IMR-90 (cell line): ENCODE measurements at regions of chr13 and their contacts with region 1.

Region 1: DNA sequence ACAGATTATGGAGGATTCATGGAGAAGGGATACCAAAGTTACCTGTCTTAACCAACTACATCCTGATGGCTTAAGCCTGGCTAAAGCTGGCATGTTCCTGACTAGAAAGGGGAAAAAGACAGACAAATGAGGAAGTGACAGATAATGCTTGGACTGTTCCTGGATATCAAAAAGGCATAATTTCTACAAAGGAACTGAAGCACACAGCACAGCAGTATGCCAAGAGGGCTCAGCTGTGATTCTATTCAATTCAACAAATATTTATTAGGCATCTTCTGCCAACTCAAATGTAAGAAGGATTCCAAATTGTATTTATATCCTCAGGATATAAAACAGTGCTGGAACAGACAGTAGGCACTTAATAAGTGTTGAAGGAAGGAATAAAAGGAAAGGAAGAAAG is 59.5 kb downstream of the KLF12 start:
- DNase-seq: peak; percentile 46
- ATAC-seq: peak; percentile 49
- H3K4me3 ChIP-seq: no peak overlapping the region
- H3K27ac ChIP-seq: no peak overlapping the region
- H3K4me1 ChIP-seq: peaks cover 6% of the 10 kb centered on the region; the same call in 1 of the 2 replicates
- H3K27me3 ChIP-seq: no peaks in the 10 kb centered on the region
- CTCF ChIP-seq: no peak
- POLR2A ChIP-seq: no peak
- RAD21 ChIP-seq: no peak

Region 2: GRCh38 chr13:74005320-74006157 is 69.2 kb before region 1 on chr13:
- CTCF ChIA-PET with region 1: no interaction called
- POLR2A ChIA-PET with region 1: no interaction called
- dilution Hi-C with region 1: no loop called
- in situ Hi-C with region 1: no loop called
- intact Hi-C with region 1: loop called (anchors 2 kb)
- DNase-seq: no peak
- ATAC-seq: no peak; the same call in 1 of the 2 replicates
- H3K4me3 ChIP-seq: no peak overlapping the region
- H3K27ac ChIP-seq: no peak overlapping the region
- H3K4me1 ChIP-seq: no peaks in the 10 kb centered on the region
- H3K27me3 ChIP-seq: no peaks in the 10 kb centered on the region
- CTCF ChIP-seq: no peak
- POLR2A ChIP-seq: no peak
- RAD21 ChIP-seq: no peak